Endothelial cell of umbilical vein (primary cell): ENCODE measurements at regions of chr11 and their contacts with region 1.

Region 1: GRCh38 chr11:57761301-57762234 is at the start of gene CTNND1:
- DNase-seq: peak; percentile 97
- H3K4me3 ChIP-seq: peak within 1 kb of the TSS; percentile 68 to 98 (median 83)
- H3K27ac ChIP-seq: peak within 1 kb of the TSS; percentile 89
- H3K4me1 ChIP-seq: peaks cover 26% of the 10 kb centered on the region
- H3K27me3 ChIP-seq: no peaks in the 10 kb centered on the region
- CTCF ChIP-seq: no peak
- POLR2A ChIP-seq: peak; percentile 80
- total RNA-seq, gene CTNND1: 268 and 285 TPM in 2 replicates

Region 2: GRCh38 chr11:57311109-57311936 is 450.2 kb before region 1 on chr11:
- CTCF ChIA-PET with region 1: no interaction called
- POLR2A ChIA-PET with region 1: no interaction called
- dilution Hi-C with region 1: no loop called
- intact Hi-C with region 1: no loop called
- DNase-seq: peak; percentile 96
- H3K4me3 ChIP-seq: peak overlapping the region; percentile 0 to 56 (median 24)
- H3K27ac ChIP-seq: peak overlapping the region; percentile 53
- H3K4me1 ChIP-seq: peaks cover 18% of the 10 kb centered on the region
- H3K27me3 ChIP-seq: no peaks in the 10 kb centered on the region
- CTCF ChIP-seq: no peak
- POLR2A ChIP-seq: peak; percentile 81

Region 3: DNA sequence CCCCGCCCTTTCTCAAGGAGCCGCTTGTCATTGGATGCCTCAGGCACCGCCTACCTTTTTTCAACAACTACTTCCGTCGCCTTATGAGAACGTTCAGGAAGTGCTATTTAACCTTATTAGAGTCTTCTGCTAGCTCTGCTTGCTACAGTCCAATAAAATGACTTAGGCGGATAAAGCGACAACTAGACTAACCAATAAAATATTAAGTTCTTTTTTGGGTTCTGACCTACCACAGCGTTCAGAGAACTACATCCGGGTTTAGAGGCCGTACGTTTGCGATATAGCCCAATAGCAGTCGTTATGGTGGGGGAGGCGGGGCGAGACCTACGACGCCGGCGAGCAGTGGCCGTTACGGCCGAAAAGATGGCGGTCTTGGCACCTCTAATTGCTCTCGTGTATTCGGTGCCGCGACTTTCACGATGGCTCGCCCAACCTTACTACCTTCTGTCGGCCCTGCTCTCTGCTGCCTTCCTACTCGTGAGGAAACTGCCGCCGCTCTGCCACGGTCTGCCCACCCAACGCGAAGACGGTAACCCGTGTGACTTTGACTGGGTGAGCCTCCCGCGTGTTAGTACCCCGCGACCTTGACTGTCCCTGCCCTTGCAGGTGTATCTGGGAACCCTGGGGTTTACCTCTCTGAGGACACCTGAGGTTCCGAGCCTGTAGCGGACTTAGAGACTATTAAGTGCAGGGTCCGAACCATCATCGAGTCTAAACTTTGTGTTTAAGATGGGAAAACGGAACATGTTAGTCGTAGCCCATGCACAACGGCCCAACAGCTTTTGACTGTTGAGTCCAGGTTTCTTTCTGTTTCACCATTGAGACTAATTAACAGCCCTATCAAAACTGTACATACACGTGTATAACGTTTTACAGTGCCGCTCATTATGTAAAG is 49.1 kb before region 1 on chr11 and contains the start of gene TMX2:
- CTCF ChIA-PET with region 1: no interaction called
- POLR2A ChIA-PET with region 1: interaction called, 3 read pairs
- dilution Hi-C with region 1: no loop called
- intact Hi-C with region 1: loop called (anchors 1 kb)
- DNase-seq: peak; percentile 99
- H3K4me3 ChIP-seq: peak within 1 kb of the TSS; percentile 64 to 100 (median 78)
- H3K27ac ChIP-seq: peak within 1 kb of the TSS; percentile 67
- H3K4me1 ChIP-seq: peaks cover 18% of the 10 kb centered on the region
- H3K27me3 ChIP-seq: no peaks in the 10 kb centered on the region
- CTCF ChIP-seq: no peak
- POLR2A ChIP-seq: no peak
- total RNA-seq, gene TMX2: 66.3 and 67.7 TPM in 2 replicates

Region 4: DNA sequence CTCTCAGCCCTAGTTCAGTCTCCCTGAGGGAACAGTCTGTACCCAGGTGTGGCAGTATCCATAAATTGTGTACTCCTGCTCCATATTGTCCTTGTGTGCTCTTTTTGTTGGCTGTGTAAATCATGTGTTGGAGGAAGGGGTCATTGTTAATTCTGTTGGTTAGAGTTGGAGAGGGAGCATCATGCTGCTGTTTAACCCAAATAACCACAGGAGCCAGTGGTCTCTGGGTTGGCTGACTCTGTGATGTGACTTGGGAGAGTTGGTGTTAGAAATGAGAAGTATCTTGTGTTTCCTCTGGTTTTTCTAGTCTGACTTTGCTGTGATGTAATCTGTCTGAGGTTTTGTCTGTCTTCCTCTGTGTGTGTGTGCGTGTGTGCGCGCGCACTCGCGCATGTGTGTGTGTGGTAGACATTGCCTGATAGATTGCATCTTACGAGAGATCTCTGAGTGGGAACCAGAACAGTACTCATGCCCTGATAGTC is 30.5 kb after region 1 on chr11:
- CTCF ChIA-PET with region 1: interaction called, 3 read pairs
- POLR2A ChIA-PET with region 1: interaction called, 5 read pairs
- dilution Hi-C with region 1: no loop called
- intact Hi-C with region 1: loop called (anchors 1 kb)
- DNase-seq: peak; percentile 46
- H3K4me3 ChIP-seq: no peak overlapping the region
- H3K27ac ChIP-seq: peak overlapping the region; percentile 55
- H3K4me1 ChIP-seq: peaks cover 33% of the 10 kb centered on the region
- H3K27me3 ChIP-seq: no peaks in the 10 kb centered on the region
- CTCF ChIP-seq: no peak
- POLR2A ChIP-seq: no peak

Region 5: GRCh38 chr11:58193391-58193790 is 431.8 kb after region 1 on chr11:
- CTCF ChIA-PET with region 1: no interaction called
- POLR2A ChIA-PET with region 1: no interaction called
- dilution Hi-C with region 1: no loop called
- intact Hi-C with region 1: no loop called
- DNase-seq: no peak
- H3K4me3 ChIP-seq: no peak overlapping the region
- H3K27ac ChIP-seq: no peak overlapping the region
- H3K4me1 ChIP-seq: no peaks in the 10 kb centered on the region
- H3K27me3 ChIP-seq: no peaks in the 10 kb centered on the region
- CTCF ChIP-seq: no peak
- POLR2A ChIP-seq: no peak